ENCODE measurements at regions of chr5 and their contacts with region 1.

Region 1: GRCh38 chr5:80407735-80408482 is at the start of gene ZFYVE16:
- DNase-seq: peak; percentile 95
- ATAC-seq: peak; percentile 84
- H3K4me3 ChIP-seq: peak within 1 kb of the TSS; percentile 82
- H3K27ac ChIP-seq: peak within 1 kb of the TSS; percentile 87
- H3K4me1 ChIP-seq: peaks cover 7% of the 10 kb centered on the region; the same call in 1 of the 2 replicates
- H3K27me3 ChIP-seq: no peaks in the 10 kb centered on the region
- CTCF ChIP-seq: 0 out of 2 replicates have a peak, but pooled peaks have one; percentile 19
- total RNA-seq, gene ZFYVE16: 7.3 and 9.7 TPM in 2 replicates

Region 2: GRCh38 chr5:80008995-80009765 is 398.7 kb before region 1 on chr5:
- CTCF ChIA-PET with region 1: no interaction called
- POLR2A ChIA-PET with region 1: no interaction called
- intact Hi-C with region 1: no loop called
- DNase-seq: no peak
- ATAC-seq: no peak
- H3K4me3 ChIP-seq: no peak overlapping the region
- H3K27ac ChIP-seq: no peak overlapping the region
- H3K4me1 ChIP-seq: no peaks in the 10 kb centered on the region
- H3K27me3 ChIP-seq: no peaks in the 10 kb centered on the region
- CTCF ChIP-seq: no peak

Region 3: GRCh38 chr5:80060966-80061365 is 346.9 kb before region 1 on chr5:
- CTCF ChIA-PET with region 1: no interaction called
- POLR2A ChIA-PET with region 1: interaction called, 17 read pairs
- intact Hi-C with region 1: no loop called
- DNase-seq: no peak
- ATAC-seq: no peak
- H3K4me3 ChIP-seq: no peak overlapping the region
- H3K27ac ChIP-seq: no peak overlapping the region
- H3K4me1 ChIP-seq: no peaks in the 10 kb centered on the region
- H3K27me3 ChIP-seq: 0 out of 2 replicates have a peak, but pooled peaks cover 9% of the 10 kb centered on the region
- CTCF ChIP-seq: no peak

Region 4: GRCh38 chr5:80139466-80139972 is 268.4 kb before region 1 on chr5:
- CTCF ChIA-PET with region 1: no interaction called
- POLR2A ChIA-PET with region 1: no interaction called
- intact Hi-C with region 1: no loop called
- DNase-seq: no peak
- ATAC-seq: no peak
- H3K4me3 ChIP-seq: no peak overlapping the region
- H3K27ac ChIP-seq: no peak overlapping the region
- H3K4me1 ChIP-seq: no peaks in the 10 kb centered on the region
- H3K27me3 ChIP-seq: no peaks in the 10 kb centered on the region
- CTCF ChIP-seq: no peak

Region 5: GRCh38 chr5:80466669-80467485 is 59.0 kb after region 1 on chr5:
- CTCF ChIA-PET with region 1: no interaction called
- POLR2A ChIA-PET with region 1: no interaction called
- intact Hi-C with region 1: no loop called
- DNase-seq: no peak
- ATAC-seq: no peak
- H3K4me3 ChIP-seq: no peak overlapping the region
- H3K27ac ChIP-seq: no peak overlapping the region
- H3K4me1 ChIP-seq: no peaks in the 10 kb centered on the region
- H3K27me3 ChIP-seq: no peaks in the 10 kb centered on the region
- CTCF ChIP-seq: no peak